Psoas muscle (tissue), 8 donors: ENCODE measurements at regions of chrX and their contacts with region 1.

Region 1: DNA sequence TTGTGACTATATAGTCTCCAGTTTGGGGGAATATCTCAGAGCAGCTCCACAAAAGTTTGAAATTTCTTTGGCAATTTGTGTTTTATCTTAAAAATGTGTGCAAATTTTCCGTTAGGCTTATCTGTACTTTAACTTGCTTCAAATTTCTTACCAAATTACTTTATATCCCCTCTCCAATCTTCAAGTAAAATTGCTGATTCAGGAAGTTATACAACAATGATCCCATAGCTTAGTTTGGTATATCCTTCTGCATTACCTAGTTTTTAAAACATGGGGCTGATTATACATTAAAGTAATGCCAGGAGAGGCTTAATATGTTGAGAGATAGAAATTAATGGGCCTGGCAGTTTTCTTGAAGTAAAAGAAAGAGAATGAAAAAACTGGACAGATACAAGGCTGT is 66.6 kb downstream of the TAF1 start:
- DNase-seq: no peak
- ATAC-seq: no peak
- H3K4me3 ChIP-seq: no peak overlapping the region
- H3K27ac ChIP-seq: no peak overlapping the region
- H3K4me1 ChIP-seq: no peaks in the 10 kb centered on the region
- H3K27me3 ChIP-seq: no peaks in the 10 kb centered on the region
- CTCF ChIP-seq: no peak

Region 2: GRCh38 chrX:71292669-71293365 is 139.9 kb before region 1 on chrX:
- intact Hi-C with region 1: loop called in 1 of 2 experiments (anchors 5 kb)
- DNase-seq: no peak
- ATAC-seq: no peak
- H3K4me3 ChIP-seq: no peak overlapping the region
- H3K27ac ChIP-seq: no peak overlapping the region
- H3K4me1 ChIP-seq: peaks cover 8% of the 10 kb centered on the region
- H3K27me3 ChIP-seq: no peaks in the 10 kb centered on the region
- CTCF ChIP-seq: no peak

Region 3: DNA sequence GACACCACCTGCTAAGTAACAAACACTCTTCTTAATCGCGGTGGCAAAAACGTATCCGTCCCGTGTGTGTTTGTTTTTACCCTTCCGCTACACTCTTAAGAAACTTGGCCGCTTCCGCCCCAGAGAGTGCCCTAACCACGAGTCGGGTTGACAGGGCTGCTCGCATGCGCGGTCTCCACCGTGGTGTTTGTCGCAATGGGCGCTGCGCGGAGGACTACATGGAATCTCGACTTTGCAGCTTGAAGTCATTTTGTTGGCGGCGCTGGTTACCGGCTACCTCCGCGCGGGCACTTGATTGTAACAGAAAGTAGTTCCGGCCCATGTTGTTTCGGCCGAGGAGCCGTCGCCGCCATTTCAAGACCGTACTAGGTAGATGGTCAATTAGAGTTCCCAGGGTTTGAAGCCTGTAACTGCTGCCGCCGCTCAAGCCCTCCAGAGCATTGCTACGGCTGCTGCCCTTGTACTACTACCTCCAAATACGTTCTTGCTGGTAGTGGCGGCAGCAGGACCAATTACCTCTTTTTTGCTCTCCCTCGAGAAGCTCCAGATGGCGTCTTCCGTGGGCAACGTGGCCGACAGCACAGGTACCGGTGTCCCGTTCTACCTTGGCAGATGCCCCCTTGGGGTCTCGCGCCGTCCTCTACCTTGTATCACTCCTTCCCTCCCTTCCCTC is 100.2 kb after region 1 on chrX and contains the start of gene OGT:
- intact Hi-C with region 1: no loop called
- DNase-seq: peak; percentile 96 to 98
- ATAC-seq: peak; percentile 90 to 95 (median 94)
- H3K4me3 ChIP-seq: peak within 1 kb of the TSS; percentile 82
- H3K27ac ChIP-seq: peak within 1 kb of the TSS; percentile 91
- H3K4me1 ChIP-seq: peaks cover 6% of the 10 kb centered on the region
- H3K27me3 ChIP-seq: no peaks in the 10 kb centered on the region
- CTCF ChIP-seq: no peak
- total RNA-seq, gene OGT: 40.9 to 64.1 (median 51.8) TPM